ENCODE measurements at regions of chr5 and their contacts with region 1.

Region 1: DNA sequence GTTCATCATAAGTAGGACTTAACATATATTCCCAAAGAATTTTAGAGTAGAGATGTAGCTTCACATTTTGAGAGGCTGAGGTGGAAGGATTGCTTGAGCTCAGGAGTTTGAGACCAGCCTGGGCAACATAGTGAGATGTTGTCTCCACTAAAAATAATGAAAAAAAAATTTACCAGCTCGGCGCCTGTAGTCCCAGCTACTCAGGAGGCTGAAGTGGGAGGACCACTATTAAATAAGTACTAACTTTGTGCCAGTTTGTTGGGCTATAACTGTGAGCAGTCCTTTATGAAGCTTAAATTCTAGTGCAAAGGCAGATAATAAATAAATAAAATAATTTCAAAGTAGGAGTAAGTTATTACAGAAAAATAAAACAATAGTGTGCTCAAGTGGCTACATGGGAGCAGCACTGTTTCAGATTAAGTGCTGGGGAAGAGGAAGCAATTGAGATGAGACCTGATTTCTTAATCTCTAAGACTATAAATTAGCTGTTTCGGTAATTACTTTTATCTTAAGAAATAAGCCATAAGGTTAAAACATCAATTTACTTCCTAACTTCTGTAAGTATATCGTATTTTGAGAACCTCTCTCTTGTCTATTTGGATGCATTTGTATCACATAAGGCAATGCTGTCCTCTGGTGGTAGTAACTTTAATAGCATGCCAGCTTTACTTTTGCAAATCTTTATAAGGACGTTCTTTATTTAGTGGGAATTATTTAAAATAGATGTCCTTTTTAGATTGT is 98.9 kb downstream of the CSNK1G3 start:
- DNase-seq: peak; percentile 74
- H3K4me3 ChIP-seq: no peak overlapping the region
- H3K27ac ChIP-seq: peak overlapping the region; percentile 8; the same call in 1 of the 2 replicates
- H3K4me1 ChIP-seq: no peaks in the 10 kb centered on the region
- H3K27me3 ChIP-seq: no peaks in the 10 kb centered on the region

Region 2: DNA sequence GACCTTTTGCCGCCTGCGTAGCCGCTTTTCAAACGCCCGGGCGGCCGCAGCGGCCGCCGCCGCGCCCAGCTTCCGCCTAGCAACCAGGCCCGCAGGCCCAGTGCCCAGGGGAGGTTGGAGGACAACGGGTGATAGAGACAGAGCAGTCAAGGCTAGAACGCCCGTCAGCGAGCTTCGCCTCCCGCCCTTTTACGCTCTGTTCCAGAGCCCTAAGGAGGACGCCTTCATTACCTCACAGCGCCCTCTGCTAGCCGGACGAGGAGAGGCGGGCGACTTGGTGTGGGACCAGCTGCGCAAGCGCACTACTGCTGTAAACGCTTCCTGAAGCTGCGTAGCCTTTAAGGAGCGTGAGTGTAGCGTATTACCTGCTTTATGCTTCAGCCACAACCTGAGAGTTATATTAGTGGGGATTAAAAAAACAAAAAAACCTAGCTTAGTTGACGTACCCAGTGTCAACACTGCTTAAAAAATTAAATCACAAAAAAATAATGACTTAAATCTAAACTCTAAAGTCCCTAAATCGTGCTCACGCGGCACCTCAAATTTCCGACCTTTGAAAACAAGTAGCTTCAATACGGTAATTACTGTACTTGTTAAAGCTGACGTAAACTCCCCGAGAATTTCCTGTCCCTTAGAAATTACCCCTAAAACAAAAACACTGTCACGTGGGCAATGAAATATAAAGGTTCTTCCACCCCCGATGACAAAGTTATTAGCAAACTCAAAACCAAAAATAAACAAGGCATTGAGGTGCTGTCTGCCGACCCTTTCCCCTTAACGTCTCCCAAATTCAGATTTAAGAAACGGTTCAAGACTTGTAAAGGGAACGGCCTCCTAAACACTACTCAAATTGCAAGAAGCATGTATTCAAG is 187.3 kb before region 1 on chr5 and contains the start of gene CEP120:
- in situ Hi-C with region 1: loop called (anchors 25 kb)
- DNase-seq: peak; percentile 100
- H3K4me3 ChIP-seq: peak within 1 kb of the TSS; percentile 93
- H3K27ac ChIP-seq: peak within 1 kb of the TSS; percentile 80
- H3K4me1 ChIP-seq: peaks cover 6% of the 10 kb centered on the region
- H3K27me3 ChIP-seq: no peaks in the 10 kb centered on the region
- total RNA-seq, gene CEP120: 16.4 and 19.3 TPM in 2 replicates

Region 3: DNA sequence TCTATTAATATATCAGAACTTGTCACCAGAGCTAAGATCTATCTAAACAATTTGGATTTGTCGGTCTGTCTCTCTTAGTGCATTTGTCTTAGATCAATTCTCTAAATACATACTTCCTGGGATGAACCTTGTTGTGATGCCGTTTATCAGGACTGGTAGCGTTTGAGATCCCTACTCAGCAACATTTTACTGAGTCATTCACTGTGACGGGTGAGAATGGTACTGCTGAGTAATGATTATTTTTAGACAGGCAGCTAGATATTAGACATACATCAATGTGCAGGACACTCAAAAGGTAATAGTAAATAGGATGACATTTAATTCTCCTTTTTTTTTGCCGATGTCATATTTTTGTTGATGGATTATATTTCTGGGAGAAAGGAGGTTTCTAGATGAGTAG is 110.1 kb after region 1 on chr5:
- in situ Hi-C with region 1: no loop called
- DNase-seq: no peak
- H3K4me3 ChIP-seq: no peak overlapping the region
- H3K27ac ChIP-seq: no peak overlapping the region
- H3K4me1 ChIP-seq: no peaks in the 10 kb centered on the region
- H3K27me3 ChIP-seq: no peaks in the 10 kb centered on the region

Region 4: GRCh38 chr5:123746683-123747360 is 136.0 kb after region 1 on chr5:
- in situ Hi-C with region 1: no loop called
- DNase-seq: no peak
- H3K4me3 ChIP-seq: no peak overlapping the region
- H3K27ac ChIP-seq: no peak overlapping the region
- H3K4me1 ChIP-seq: no peaks in the 10 kb centered on the region
- H3K27me3 ChIP-seq: no peaks in the 10 kb centered on the region